Activated CD8-positive, alpha-beta T cell treated with anti-CD3 and anti-CD28 coated beads, Interleukin-2, amount 10 ng/mL, durations not matched to agents 7 days and 5 days (primary cell): ENCODE measurements at regions of chr1 and their contacts with region 1.

Region 1: GRCh38 chr1:160098852-160099561 is 588 bp upstream of the IGSF8 start:
- DNase-seq: peak; percentile 99
- ATAC-seq: peak; percentile 89
- H3K4me3 Mint-ChIP-seq: peak overlapping the region; percentile 73
- H3K27ac Mint-ChIP-seq: peak overlapping the region; percentile 88
- H3K4me1 Mint-ChIP-seq: peaks cover 55% of the 10 kb centered on the region
- H3K27me3 Mint-ChIP-seq: no peaks in the 10 kb centered on the region

Region 2: GRCh38 chr1:159829273-159829634 is 269.8 kb before region 1 on chr1:
- CTCF ChIA-PET with region 1: no interaction called
- POLR2A ChIA-PET with region 1: no interaction called
- DNase-seq: no peak
- ATAC-seq: no peak
- H3K4me3 Mint-ChIP-seq: no peak overlapping the region
- H3K27ac Mint-ChIP-seq: no peak overlapping the region
- H3K4me1 Mint-ChIP-seq: peaks cover 50% of the 10 kb centered on the region
- H3K27me3 Mint-ChIP-seq: peaks cover 40% of the 10 kb centered on the region

Region 3: DNA sequence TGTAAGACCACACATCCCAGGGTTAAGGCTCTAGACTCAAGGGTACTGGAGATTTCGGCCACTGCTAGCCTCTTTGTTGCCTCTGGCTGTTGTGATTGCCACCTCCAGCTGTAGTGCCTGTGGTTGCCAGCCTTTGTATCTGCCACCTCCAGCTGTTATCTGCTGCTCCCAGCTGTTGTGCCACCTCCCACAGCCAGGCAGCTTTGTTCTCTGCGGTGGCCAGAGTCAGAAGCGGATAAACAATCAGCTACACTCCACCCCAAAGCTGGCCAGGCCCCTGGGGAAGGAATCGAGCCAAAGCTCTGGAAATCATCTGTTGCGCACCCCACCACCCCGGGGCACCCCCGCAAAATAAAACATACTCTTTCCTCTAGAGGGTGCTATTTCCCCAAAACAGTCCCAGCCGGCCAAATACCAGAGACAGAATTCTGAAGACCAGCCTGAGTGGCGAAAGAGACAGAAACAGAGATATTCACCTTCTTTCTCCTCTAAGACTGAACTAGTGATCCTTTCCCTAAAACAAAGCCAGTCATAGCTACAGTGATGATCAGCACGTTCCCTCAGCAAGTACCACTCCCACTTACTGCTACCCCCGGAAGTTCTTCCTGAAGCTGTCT is 52.4 kb before region 1 on chr1:
- CTCF ChIA-PET with region 1: interaction called, 10 read pairs
- POLR2A ChIA-PET with region 1: no interaction called
- DNase-seq: peak; percentile 61
- ATAC-seq: peak; percentile 96
- H3K4me3 Mint-ChIP-seq: peak overlapping the region; percentile 65
- H3K27ac Mint-ChIP-seq: peak overlapping the region; percentile 72
- H3K4me1 Mint-ChIP-seq: peaks cover 12% of the 10 kb centered on the region
- H3K27me3 Mint-ChIP-seq: peaks cover 28% of the 10 kb centered on the region

Region 4: DNA sequence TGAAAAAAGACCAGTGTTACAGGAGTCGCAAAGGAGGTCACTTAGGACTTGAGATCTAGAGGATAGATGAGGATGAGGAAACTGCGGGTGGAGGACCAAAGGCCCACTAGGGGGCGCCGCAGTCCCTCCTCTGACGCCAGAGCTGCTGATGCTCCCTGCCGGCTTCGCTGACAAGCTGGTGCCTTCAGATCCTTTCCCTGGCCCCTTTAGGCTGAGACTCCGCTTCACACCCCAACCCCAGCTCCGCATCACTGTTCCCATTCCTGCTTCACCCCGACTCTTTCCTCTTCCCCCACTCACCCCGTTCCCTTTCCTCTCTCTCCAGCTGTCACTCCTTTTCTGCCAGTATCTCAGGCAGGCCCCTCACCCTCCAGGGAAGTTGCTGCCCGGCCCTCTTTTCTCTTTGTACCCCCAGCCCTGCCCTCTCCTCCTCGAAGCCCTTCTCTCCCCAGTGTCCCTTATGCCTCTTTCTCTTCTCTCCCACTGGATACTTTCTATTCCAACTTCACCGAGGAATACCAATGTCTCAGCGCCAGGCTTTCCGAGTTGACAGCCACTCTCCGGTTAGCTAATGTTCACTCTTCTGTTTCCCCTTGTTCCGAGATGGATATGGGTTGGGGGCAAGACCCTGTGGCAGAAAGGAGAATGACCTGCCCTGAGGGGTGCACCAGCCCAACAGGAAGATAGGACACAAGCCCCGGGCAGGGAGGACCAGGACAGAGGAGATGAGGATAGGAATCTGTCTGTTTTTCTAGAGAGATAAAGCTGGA is 13.1 kb before region 1 on chr1:
- CTCF ChIA-PET with region 1: interaction called, 88 read pairs
- POLR2A ChIA-PET with region 1: interaction called, 4 read pairs
- DNase-seq: peak; percentile 87
- ATAC-seq: peak; percentile 76
- H3K4me3 Mint-ChIP-seq: no peak overlapping the region
- H3K27ac Mint-ChIP-seq: no peak overlapping the region
- H3K4me1 Mint-ChIP-seq: peaks cover 12% of the 10 kb centered on the region
- H3K27me3 Mint-ChIP-seq: peaks cover 20% of the 10 kb centered on the region

Region 5: DNA sequence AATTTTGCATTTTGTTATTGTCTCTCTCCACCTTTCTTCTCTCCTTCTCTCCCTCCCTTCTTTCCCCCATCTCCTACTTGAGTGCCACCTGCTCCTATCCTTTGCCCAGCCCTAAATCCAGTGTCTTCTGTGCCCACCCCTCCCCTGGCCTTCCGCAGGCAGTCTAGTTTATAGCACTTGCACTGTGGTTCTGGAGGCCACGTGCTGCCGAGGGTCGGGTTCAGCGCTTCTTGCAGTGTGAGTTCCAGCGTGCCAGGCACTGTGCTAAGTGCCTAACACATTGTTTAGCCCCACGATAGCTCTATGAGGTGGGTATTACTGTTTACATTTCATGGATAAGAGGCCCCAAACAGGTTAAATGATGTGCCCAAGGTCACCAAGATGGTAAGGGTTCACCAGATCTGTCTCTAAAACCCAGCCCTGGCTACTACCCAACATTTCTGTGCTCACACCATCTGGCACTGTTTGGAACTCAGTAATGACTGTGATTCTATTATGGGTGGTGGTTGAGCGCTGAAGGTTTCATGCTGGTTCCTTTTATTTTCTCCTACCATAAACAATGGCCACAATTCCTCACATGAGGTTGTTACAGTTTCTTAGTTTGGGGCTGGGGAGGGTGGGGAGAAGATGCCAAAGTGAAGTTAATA is 38.3 kb after region 1 on chr1:
- CTCF ChIA-PET with region 1: no interaction called
- POLR2A ChIA-PET with region 1: no interaction called
- DNase-seq: no peak
- ATAC-seq: no peak
- H3K4me3 Mint-ChIP-seq: no peak overlapping the region
- H3K27ac Mint-ChIP-seq: no peak overlapping the region
- H3K4me1 Mint-ChIP-seq: no peaks in the 10 kb centered on the region
- H3K27me3 Mint-ChIP-seq: peaks cover 18% of the 10 kb centered on the region

Region 6: GRCh38 chr1:160219062-160219929 is 120.3 kb after region 1 on chr1:
- CTCF ChIA-PET with region 1: interaction called, 11 read pairs
- POLR2A ChIA-PET with region 1: no interaction called
- DNase-seq: no peak
- ATAC-seq: no peak
- H3K4me3 Mint-ChIP-seq: no peak overlapping the region
- H3K27ac Mint-ChIP-seq: no peak overlapping the region
- H3K4me1 Mint-ChIP-seq: no peaks in the 10 kb centered on the region
- H3K27me3 Mint-ChIP-seq: no peaks in the 10 kb centered on the region

Region 7: GRCh38 chr1:160376525-160377131 is 277.6 kb after region 1 on chr1:
- CTCF ChIA-PET with region 1: interaction called, 43 read pairs
- POLR2A ChIA-PET with region 1: no interaction called
- DNase-seq: peak; percentile 55
- ATAC-seq: peak; percentile 73
- H3K4me3 Mint-ChIP-seq: no peak overlapping the region
- H3K27ac Mint-ChIP-seq: no peak overlapping the region
- H3K4me1 Mint-ChIP-seq: peaks cover 13% of the 10 kb centered on the region
- H3K27me3 Mint-ChIP-seq: peaks cover 8% of the 10 kb centered on the region